ENCODE measurements at regions of chr14 and their contacts with region 1.

Region 1: GRCh38 chr14:54347997-54348611 is 48.7 kb upstream of the CDKN3 start:
- DNase-seq: peak; percentile 63
- H3K4me3 ChIP-seq: no peak overlapping the region
- H3K27ac ChIP-seq: no peak overlapping the region
- H3K4me1 ChIP-seq: peaks cover 12% of the 10 kb centered on the region
- H3K27me3 ChIP-seq: no peaks in the 10 kb centered on the region
- CTCF ChIP-seq: peak; percentile 52 to 56
- POLR2A ChIP-seq: no peak

Region 2: GRCh38 chr14:52961060-52961639 is 1387.0 kb before region 1 on chr14:
- CTCF ChIA-PET with region 1: interaction called, 14 read pairs
- POLR2A ChIA-PET with region 1: no interaction called
- dilution Hi-C with region 1: no loop called
- intact Hi-C with region 1: loop called (anchors 1 kb)
- DNase-seq: peak; percentile 74
- H3K4me3 ChIP-seq: no peak overlapping the region
- H3K27ac ChIP-seq: no peak overlapping the region
- H3K4me1 ChIP-seq: peaks cover 10% of the 10 kb centered on the region
- H3K27me3 ChIP-seq: peaks cover 0 to 2% of the 10 kb centered on the region in 2 experiments
- CTCF ChIP-seq: peak; percentile 66 to 67
- POLR2A ChIP-seq: no peak

Region 3: GRCh38 chr14:53295985-53296582 is 1052.0 kb before region 1 on chr14:
- CTCF ChIA-PET with region 1: interaction called, 111 read pairs
- POLR2A ChIA-PET with region 1: no interaction called
- dilution Hi-C with region 1: no loop called
- intact Hi-C with region 1: loop called (anchors 1 kb)
- DNase-seq: peak; percentile 48
- H3K4me3 ChIP-seq: no peak overlapping the region
- H3K27ac ChIP-seq: no peak overlapping the region
- H3K4me1 ChIP-seq: no peaks in the 10 kb centered on the region
- H3K27me3 ChIP-seq: peaks cover 0 to 2% of the 10 kb centered on the region in 2 experiments
- CTCF ChIP-seq: peak; percentile 41 to 45
- POLR2A ChIP-seq: no peak

Region 4: GRCh38 chr14:53399057-53399456 is 949.0 kb before region 1 on chr14:
- CTCF ChIA-PET with region 1: interaction called, 11 read pairs
- POLR2A ChIA-PET with region 1: no interaction called
- dilution Hi-C with region 1: no loop called
- intact Hi-C with region 1: no loop called
- DNase-seq: peak; percentile 23
- H3K4me3 ChIP-seq: no peak overlapping the region
- H3K27ac ChIP-seq: no peak overlapping the region
- H3K4me1 ChIP-seq: no peaks in the 10 kb centered on the region
- H3K27me3 ChIP-seq: no peaks in the 10 kb centered on the region
- CTCF ChIP-seq: peak; percentile 14 to 17
- POLR2A ChIP-seq: no peak

Region 5: GRCh38 chr14:53539489-53540126 is 808.5 kb before region 1 on chr14:
- CTCF ChIA-PET with region 1: interaction called, 66 read pairs
- POLR2A ChIA-PET with region 1: interaction called, 3 read pairs
- dilution Hi-C with region 1: loop called (anchors 25 kb)
- intact Hi-C with region 1: no loop called
- DNase-seq: peak; percentile 94
- H3K4me3 ChIP-seq: no peak overlapping the region
- H3K27ac ChIP-seq: no peak overlapping the region
- H3K4me1 ChIP-seq: peaks cover 43% of the 10 kb centered on the region
- H3K27me3 ChIP-seq: no peaks in the 10 kb centered on the region
- CTCF ChIP-seq: peak; percentile 74 to 82
- POLR2A ChIP-seq: no peak

Region 6: GRCh38 chr14:54175298-54175942 is 172.7 kb before region 1 on chr14:
- CTCF ChIA-PET with region 1: interaction called, 20 read pairs
- POLR2A ChIA-PET with region 1: no interaction called
- dilution Hi-C with region 1: no loop called
- intact Hi-C with region 1: no loop called
- DNase-seq: peak; percentile 91
- H3K4me3 ChIP-seq: no peak overlapping the region
- H3K27ac ChIP-seq: no peak overlapping the region
- H3K4me1 ChIP-seq: peaks cover 36% of the 10 kb centered on the region
- H3K27me3 ChIP-seq: no peaks in the 10 kb centered on the region
- CTCF ChIP-seq: peak; percentile 57 to 62
- POLR2A ChIP-seq: no peak

Region 7: DNA sequence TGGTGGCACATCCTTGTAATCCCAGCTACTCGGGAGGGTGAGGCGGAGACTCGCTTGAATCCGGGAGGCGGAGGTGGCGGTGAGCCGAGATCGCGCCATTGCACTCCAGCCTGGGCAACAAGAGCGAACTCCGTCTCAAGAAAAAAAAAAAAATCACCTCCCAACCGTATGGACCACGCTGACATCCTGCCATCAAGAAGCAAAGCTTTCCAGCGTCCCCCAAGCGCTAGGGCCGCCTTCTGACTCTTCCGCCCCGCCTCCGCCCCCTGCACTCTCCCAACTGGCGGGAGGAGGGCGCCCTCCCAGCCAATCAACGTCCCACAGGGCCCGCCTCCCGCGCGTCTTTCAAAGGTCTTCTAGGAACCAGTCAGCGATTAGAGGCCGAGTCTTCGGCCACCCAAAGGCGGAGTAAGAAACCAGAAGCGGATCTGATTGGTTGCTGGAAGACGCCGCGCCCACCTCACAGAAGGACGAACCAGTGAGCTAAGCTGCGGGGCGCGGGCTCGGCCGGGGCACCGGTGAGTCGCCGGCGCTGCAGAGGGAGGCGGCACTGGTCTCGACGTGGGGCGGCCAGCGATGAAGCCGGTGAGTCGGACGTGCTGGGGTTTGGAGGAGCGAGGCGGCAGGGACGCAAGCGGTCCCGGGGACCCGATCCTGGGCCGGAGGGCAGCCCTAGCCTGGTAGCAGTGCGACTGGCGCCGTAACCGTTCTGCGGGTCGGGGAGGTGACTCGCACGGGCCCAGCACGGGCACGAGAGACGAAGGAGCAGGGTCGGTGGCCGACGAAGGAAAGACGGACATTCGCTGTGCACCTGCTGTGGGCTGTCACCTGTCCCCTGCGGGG is 48.6 kb after region 1 on chr14 and contains the start of gene CDKN3:
- CTCF ChIA-PET with region 1: interaction called, 10 read pairs
- POLR2A ChIA-PET with region 1: no interaction called
- dilution Hi-C with region 1: no loop called
- intact Hi-C with region 1: no loop called
- DNase-seq: peak; percentile 100
- H3K4me3 ChIP-seq: peak within 1 kb of the TSS; percentile 7 to 76 (median 61)
- H3K27ac ChIP-seq: peak within 1 kb of the TSS; percentile 14
- H3K4me1 ChIP-seq: peaks cover 8% of the 10 kb centered on the region
- H3K27me3 ChIP-seq: peaks cover 0 to 4% of the 10 kb centered on the region in 2 experiments
- CTCF ChIP-seq: peak in 1 of 2 donors; percentile 42
- POLR2A ChIP-seq: peak; percentile 65
- total RNA-seq, gene CDKN3: 52.0 and 53.2 TPM in 2 replicates

Region 8: GRCh38 chr14:54475187-54475899 is 127.2 kb after region 1 on chr14:
- CTCF ChIA-PET with region 1: no interaction called
- POLR2A ChIA-PET with region 1: no interaction called
- dilution Hi-C with region 1: no loop called
- intact Hi-C with region 1: no loop called
- DNase-seq: no peak
- H3K4me3 ChIP-seq: no peak overlapping the region
- H3K27ac ChIP-seq: no peak overlapping the region
- H3K4me1 ChIP-seq: no peaks in the 10 kb centered on the region
- H3K27me3 ChIP-seq: no peaks in the 10 kb centered on the region
- CTCF ChIP-seq: no peak
- POLR2A ChIP-seq: no peak

Measured in endothelial cell of umbilical vein (primary cell).